ENCODE measurements at regions of chr19 and their contacts with region 1.

Region 1: DNA sequence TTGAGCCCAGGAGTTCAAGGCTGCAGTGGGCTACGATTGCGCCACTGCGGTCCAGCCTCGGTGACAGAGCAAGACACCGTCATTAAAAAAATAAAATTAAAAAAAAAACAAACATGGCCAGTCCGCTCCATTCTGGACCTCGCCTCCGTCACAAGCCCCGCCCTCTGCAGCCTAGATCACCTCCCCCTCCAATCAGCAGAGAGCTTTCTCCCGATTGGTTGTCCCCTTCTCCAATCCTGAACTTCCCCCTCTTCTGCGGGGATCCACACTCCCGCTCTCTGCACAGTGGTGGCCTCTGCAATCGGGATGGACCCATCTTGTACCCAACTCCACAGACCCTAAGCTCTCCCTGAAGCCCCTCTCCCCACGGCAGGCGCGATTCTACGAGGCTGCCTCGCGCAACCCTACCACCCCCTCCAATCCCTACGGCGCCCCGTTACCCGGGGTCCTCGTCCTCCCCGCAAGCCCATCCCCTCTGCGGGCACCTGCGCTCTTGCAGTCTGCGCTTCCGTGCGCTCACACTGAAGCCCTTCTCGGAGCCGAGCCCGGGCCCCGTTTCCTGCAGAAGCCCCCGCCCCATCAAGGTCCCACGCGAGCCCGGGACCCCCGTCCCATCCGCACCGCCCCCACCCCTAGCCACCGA is 540 bp downstream of the TMEM160 start:
- DNase-seq: peak; percentile 92
- ATAC-seq: peak; percentile 73
- H3K4me3 Mint-ChIP-seq: peak overlapping the region; percentile 90
- H3K27ac Mint-ChIP-seq: peak overlapping the region; percentile 86
- H3K4me1 Mint-ChIP-seq: peaks cover 8% of the 10 kb centered on the region
- H3K27me3 Mint-ChIP-seq: no peaks in the 10 kb centered on the region

Region 2: GRCh38 chr19:46746281-46747013 is 301.4 kb before region 1 on chr19 and contains the start of gene STRN4:
- CTCF ChIA-PET with region 1: no interaction called
- POLR2A ChIA-PET with region 1: no interaction called
- intact Hi-C with region 1: loop called in 1 of 2 experiments (anchors 5 kb)
- DNase-seq: peak; percentile 73
- ATAC-seq: peak; percentile 68
- H3K4me3 Mint-ChIP-seq: peak within 1 kb of the TSS; percentile 89
- H3K27ac Mint-ChIP-seq: peak within 1 kb of the TSS; percentile 89
- H3K4me1 Mint-ChIP-seq: peaks cover 49% of the 10 kb centered on the region
- H3K27me3 Mint-ChIP-seq: no peaks in the 10 kb centered on the region
- total RNA-seq, gene STRN4: 56.4 to 56.8 TPM

Region 3: GRCh38 chr19:46860125-46860845 is 187.6 kb before region 1 on chr19:
- CTCF ChIA-PET with region 1: no interaction called
- POLR2A ChIA-PET with region 1: interaction called, 3 read pairs
- intact Hi-C with region 1: loop called in 1 of 2 experiments (anchors 1 kb)
- DNase-seq: peak; percentile 99
- ATAC-seq: peak; percentile 82
- H3K4me3 Mint-ChIP-seq: no peak overlapping the region
- H3K27ac Mint-ChIP-seq: peak overlapping the region; percentile 78
- H3K4me1 Mint-ChIP-seq: peaks cover 25% of the 10 kb centered on the region
- H3K27me3 Mint-ChIP-seq: no peaks in the 10 kb centered on the region

Region 4: GRCh38 chr19:47130591-47131227 is 82.8 kb after region 1 on chr19 and contains the start of gene SAE1:
- CTCF ChIA-PET with region 1: interaction called, 3 read pairs
- POLR2A ChIA-PET with region 1: no interaction called
- intact Hi-C with region 1: loop called in 1 of 2 experiments (anchors 1 kb)
- DNase-seq: peak; percentile 95
- ATAC-seq: peak; percentile 89
- H3K4me3 Mint-ChIP-seq: peak within 1 kb of the TSS; percentile 99
- H3K27ac Mint-ChIP-seq: peak within 1 kb of the TSS; percentile 97
- H3K4me1 Mint-ChIP-seq: peaks cover 41% of the 10 kb centered on the region
- H3K27me3 Mint-ChIP-seq: no peaks in the 10 kb centered on the region
- total RNA-seq, gene SAE1: 143 to 156 TPM

Region 5: DNA sequence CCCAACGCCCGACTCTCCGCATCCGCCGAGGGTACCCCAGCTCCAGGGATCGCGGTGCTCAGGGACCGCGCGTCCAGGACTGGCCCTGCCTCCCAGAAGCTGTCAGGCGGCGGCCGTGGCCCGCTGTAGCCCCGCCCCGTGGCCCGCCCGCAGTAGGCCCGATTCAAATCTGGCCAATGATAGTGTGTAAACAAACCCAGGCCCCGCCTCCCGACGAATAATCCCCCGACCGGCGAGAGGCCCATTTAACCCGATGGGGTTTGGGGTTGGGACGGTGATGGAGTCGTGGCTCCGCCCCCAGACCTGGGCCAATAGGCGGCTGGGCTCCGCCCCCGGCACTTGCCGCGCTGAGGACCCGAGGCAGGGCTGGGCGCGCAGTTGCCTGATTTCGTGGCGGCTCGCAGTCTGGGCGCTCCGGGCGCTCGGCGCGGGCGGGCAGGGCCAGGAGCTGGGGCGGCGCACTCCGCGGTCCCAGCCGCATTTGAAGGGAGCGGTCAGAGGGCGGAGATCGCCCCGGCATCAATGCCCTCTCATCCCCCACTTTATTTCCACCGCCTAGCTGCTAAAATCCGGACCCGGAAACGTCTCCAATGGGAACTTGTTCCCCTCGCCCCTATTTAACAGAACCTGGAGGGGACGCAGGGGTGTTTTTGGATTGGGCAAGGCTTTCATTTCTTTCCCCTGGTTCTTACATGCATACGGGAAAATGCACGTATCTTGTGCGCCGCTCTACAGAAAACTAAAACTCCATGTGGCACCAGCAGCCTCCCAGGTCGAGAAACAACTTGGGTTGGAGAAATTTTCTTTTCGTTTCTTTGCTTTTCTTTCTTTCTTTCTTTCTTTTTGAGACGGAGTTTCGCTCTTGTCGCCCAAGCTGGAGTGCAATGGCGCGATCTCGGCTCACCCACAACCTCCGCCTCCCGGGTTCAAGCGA is 552.6 kb after region 1 on chr19:
- CTCF ChIA-PET with region 1: no interaction called
- POLR2A ChIA-PET with region 1: no interaction called
- intact Hi-C with region 1: loop called in 1 of 2 experiments (anchors 5 kb)
- DNase-seq: peak; percentile 100
- ATAC-seq: peak; percentile 98
- H3K4me3 Mint-ChIP-seq: peak overlapping the region; percentile 79
- H3K27ac Mint-ChIP-seq: peak overlapping the region; percentile 89
- H3K4me1 Mint-ChIP-seq: peaks cover 31% of the 10 kb centered on the region
- H3K27me3 Mint-ChIP-seq: no peaks in the 10 kb centered on the region